Esophagus squamous epithelium (tissue), 5 donors: ENCODE measurements at regions of chr20 and their contacts with region 1.

Region 1: GRCh38 chr20:49037962-49038387 is 8.1 kb upstream of the CSE1L start:
- DNase-seq: no peak
- H3K4me3 ChIP-seq: no peak overlapping the region
- H3K27ac ChIP-seq: no peak overlapping the region
- H3K4me1 ChIP-seq: peaks cover 0 to 8% (median 0%) of the 10 kb centered on the region in 3 donors
- H3K27me3 ChIP-seq: no peaks in the 10 kb centered on the region
- CTCF ChIP-seq: no peak
- POLR2A ChIP-seq: no peak

Region 2: GRCh38 chr20:49078296-49078695 is 40.3 kb after region 1 on chr20:
- intact Hi-C with region 1: loop called (anchors 10 kb)
- DNase-seq: no peak
- H3K4me3 ChIP-seq: no peak overlapping the region
- H3K27ac ChIP-seq: no peak overlapping the region
- H3K4me1 ChIP-seq: no peaks in the 10 kb centered on the region
- H3K27me3 ChIP-seq: no peaks in the 10 kb centered on the region
- CTCF ChIP-seq: no peak
- POLR2A ChIP-seq: no peak

Region 3: GRCh38 chr20:49179368-49180277 is 141.6 kb after region 1 on chr20:
- intact Hi-C with region 1: no loop called
- DNase-seq: no peak
- H3K4me3 ChIP-seq: no peak overlapping the region
- H3K27ac ChIP-seq: peak overlapping the region; percentile 11 to 61 (median 47)
- H3K4me1 ChIP-seq: peaks cover 0 to 57% (median 21%) of the 10 kb centered on the region in 3 donors
- H3K27me3 ChIP-seq: no peaks in the 10 kb centered on the region
- CTCF ChIP-seq: no peak
- POLR2A ChIP-seq: no peak

Region 4: DNA sequence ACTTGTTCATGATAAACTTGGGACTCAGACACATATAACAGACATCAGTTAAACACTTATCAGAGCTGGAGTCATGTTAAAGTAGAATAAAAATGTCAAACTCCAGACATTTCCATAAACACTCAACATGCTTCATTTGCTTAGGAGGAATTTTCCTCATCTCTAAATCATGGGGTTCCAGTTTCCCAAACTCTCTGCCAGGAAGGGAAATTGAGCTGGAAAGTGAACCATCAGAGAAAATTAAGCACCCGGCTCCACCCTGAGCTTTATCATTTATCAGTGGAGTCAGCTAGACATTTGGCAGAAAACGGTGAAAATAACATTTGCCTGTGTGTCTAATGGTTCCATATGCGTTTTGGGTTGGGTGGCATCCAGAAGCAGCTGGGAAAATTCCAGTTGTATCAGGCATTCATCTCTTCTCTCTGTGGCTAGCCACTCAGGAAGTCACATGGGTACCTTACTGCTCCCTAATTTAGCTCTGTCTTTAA is 265.1 kb after region 1 on chr20:
- intact Hi-C with region 1: no loop called
- DNase-seq: no peak
- H3K4me3 ChIP-seq: no peak overlapping the region
- H3K27ac ChIP-seq: no peak overlapping the region
- H3K4me1 ChIP-seq: peaks cover 0 to 16% (median 0%) of the 10 kb centered on the region in 3 donors
- H3K27me3 ChIP-seq: no peaks in the 10 kb centered on the region
- CTCF ChIP-seq: no peak
- POLR2A ChIP-seq: no peak